Dendritic cell treated with granulocyte-macrophage colony-stimulating factor and Interleukin-4, amounts not matched to agents 40 ng/mL and 50 ng/mL, for 4 days (primary cell): ENCODE measurements at regions of chr7 and their contacts with region 1.

Region 1: GRCh38 chr7:50142425-50143017 is 49.5 kb upstream of the ZPBP start:
- H3K4me3 Mint-ChIP-seq: no peak overlapping the region
- H3K27ac Mint-ChIP-seq: no peak overlapping the region
- H3K4me1 Mint-ChIP-seq: peaks cover 11% of the 10 kb centered on the region
- H3K27me3 Mint-ChIP-seq: peaks cover 2% of the 10 kb centered on the region

Region 2: GRCh38 chr7:50174948-50175347 is 32.4 kb after region 1 on chr7:
- intact Hi-C with region 1: no loop called
- H3K4me3 Mint-ChIP-seq: no peak overlapping the region
- H3K27ac Mint-ChIP-seq: no peak overlapping the region
- H3K4me1 Mint-ChIP-seq: peaks cover 12% of the 10 kb centered on the region
- H3K27me3 Mint-ChIP-seq: peaks cover 8% of the 10 kb centered on the region

Region 3: GRCh38 chr7:50185208-50185607 is 42.7 kb after region 1 on chr7:
- intact Hi-C with region 1: loop called (anchors 5 kb)
- H3K4me3 Mint-ChIP-seq: peak overlapping the region; percentile 37
- H3K27ac Mint-ChIP-seq: peak overlapping the region; percentile 65
- H3K4me1 Mint-ChIP-seq: peaks cover 88% of the 10 kb centered on the region
- H3K27me3 Mint-ChIP-seq: no peaks in the 10 kb centered on the region

Region 4: GRCh38 chr7:50293509-50294179 is 151.1 kb after region 1 on chr7:
- intact Hi-C with region 1: no loop called
- H3K4me3 Mint-ChIP-seq: no peak overlapping the region
- H3K27ac Mint-ChIP-seq: no peak overlapping the region
- H3K4me1 Mint-ChIP-seq: peaks cover 16% of the 10 kb centered on the region
- H3K27me3 Mint-ChIP-seq: no peaks in the 10 kb centered on the region

Region 5: DNA sequence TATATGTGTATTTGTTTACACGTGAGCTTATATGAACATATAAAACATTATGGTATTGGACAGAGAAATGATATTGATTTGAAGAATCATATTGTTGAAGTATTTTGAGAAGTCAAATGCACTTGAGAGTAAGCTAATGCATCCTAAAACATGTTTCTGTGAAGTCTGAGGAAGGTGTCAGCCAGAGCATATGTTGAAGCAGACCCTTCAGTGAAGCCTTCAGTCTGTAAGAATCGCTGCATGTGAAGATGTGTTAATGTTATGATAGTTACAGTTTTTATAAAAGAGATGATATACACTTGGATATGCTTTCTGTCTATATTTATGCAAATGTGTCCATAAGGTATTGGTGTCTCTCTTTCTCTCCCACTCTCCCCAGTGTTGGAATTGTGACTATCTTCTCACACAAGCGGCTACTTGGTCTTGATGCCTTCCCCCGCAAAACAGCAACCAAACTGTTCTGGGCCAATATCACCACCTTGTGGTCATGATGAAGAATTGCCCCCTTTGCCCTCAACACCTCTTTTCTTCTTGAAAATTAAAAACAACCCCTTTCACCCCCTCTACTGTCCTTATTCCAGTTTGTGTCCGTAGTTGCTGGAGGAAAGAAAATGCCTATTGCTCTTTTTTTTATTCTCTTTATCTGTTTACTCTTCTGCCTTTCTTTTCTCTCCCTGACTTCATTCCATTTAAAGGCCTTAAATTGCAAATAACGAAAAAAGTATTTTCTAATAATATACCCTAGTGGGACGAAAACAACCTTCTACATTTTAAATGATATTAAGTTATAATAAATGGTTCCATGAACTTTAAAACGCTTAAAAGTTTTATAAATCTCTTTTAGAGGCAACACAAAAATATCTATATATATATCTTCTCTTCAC is 226.9 kb after region 1 on chr7:
- intact Hi-C with region 1: loop called (anchors 2 kb)
- H3K4me3 Mint-ChIP-seq: no peak overlapping the region
- H3K27ac Mint-ChIP-seq: no peak overlapping the region
- H3K4me1 Mint-ChIP-seq: peaks cover 36% of the 10 kb centered on the region
- H3K27me3 Mint-ChIP-seq: no peaks in the 10 kb centered on the region

Region 6: DNA sequence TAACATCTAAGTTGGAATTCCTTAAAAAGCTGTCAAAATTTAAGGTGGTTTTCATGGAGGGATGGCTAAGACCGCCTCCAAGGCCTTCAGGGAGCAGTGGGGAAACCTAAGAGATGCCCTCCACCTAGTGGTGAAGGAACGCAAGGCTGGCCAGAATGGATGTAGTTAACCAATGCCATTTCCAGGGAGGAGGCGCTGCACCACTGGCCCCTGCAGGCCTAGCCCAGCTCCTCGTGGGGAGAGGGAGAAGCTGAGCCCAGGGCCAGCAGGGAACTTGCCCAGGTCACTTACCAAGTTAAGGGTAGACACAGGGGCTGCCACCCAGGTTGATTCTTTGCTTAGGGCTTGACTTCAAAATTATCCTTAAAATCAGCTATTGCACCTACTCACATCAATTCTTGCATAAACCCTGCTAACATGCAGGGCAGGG is 275.6 kb after region 1 on chr7:
- intact Hi-C with region 1: loop called (anchors 1 kb)
- H3K4me3 Mint-ChIP-seq: no peak overlapping the region
- H3K27ac Mint-ChIP-seq: no peak overlapping the region
- H3K4me1 Mint-ChIP-seq: peaks cover 46% of the 10 kb centered on the region
- H3K27me3 Mint-ChIP-seq: no peaks in the 10 kb centered on the region

Region 7: DNA sequence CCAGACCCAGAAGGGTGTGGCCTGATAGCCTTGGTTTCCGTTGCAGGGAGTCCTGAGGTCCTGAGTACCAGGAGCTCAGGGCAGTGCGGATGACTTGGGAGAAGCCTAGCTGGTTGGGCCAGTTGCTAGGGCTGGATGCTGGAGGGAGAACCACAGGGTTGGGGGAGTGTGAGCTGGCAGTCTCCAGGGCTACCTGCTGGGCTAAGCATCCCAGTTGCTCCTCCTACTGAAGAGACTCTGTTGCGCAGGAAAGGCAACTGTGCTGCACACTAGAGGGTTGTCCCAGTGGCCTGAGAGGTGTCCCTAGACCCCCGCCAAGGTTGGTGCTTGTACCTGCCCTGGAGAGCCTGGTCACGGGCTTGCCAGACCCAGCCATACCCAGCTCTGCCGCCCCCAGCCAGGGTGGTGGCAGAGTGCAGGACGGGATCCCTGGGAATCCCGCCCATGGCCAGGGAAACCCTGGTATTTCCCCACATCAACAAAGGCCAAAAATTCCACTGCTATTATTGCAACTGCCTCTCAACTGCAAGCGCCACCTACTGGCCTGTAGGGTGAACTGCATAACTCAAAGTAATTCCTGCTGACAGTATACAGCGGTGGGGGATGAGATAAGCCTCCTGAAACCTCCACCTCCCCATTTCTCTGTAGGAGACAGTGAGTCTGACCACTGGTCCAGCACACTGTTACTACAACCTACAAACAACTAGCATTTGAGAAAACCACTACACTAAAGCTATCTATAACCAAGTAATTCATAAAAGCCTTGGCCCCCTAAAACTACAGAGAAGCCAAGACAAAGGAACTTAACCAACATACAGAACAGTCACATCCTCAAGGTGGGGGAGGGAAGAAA is 490.3 kb after region 1 on chr7:
- intact Hi-C with region 1: loop called (anchors 5 kb)
- H3K4me3 Mint-ChIP-seq: no peak overlapping the region
- H3K27ac Mint-ChIP-seq: no peak overlapping the region
- H3K4me1 Mint-ChIP-seq: no peaks in the 10 kb centered on the region
- H3K27me3 Mint-ChIP-seq: no peaks in the 10 kb centered on the region